GM12878 (cell line): ENCODE measurements at regions of chr2 and their contacts with region 1.

Region 1: DNA sequence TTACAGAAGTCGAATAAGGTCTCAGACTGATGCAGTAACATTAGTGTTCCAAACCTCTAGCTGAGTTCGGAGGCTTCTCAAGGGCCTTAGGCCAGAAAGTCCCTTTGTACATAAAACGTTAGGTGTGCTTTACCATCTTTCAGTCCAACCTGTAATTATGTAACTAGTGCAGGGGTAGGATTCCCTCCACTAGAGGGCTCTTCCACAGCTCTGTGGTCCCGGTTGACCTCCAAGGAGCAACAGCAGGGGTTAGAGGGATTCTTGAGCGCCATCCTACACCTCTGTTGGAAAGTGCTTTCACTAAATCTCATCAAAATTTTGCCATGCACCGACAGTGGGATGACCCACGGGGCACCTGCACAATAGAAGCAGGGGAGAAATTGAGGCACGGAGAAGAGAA is 155.8 kb upstream of the LRP1B start:
- DNase-seq: no peak
- ATAC-seq: peak; percentile 91
- H3K4me3 ChIP-seq: no peak overlapping the region
- H3K27ac ChIP-seq: no peak overlapping the region
- H3K4me1 ChIP-seq: no peaks in the 10 kb centered on the region
- H3K27me3 ChIP-seq: no peaks in the 10 kb centered on the region
- CTCF ChIP-seq: peak; percentile 39 to 58 (median 55)
- EP300 ChIP-seq: no peak
- POLR2A ChIP-seq: no peak
- RAD21 ChIP-seq: peak; percentile 37

Region 2: GRCh38 chr2:142603759-142604158 is 317.2 kb after region 1 on chr2:
- CTCF ChIA-PET with region 1: interaction called, 7 read pairs
- POLR2A ChIA-PET with region 1: no interaction called
- RAD21 ChIA-PET with region 1: no interaction called
- SMC1A ChIA-PET with region 1: no interaction called
- in situ Hi-C with region 1: no loop called
- intact Hi-C with region 1: loop called (anchors 2 kb)
- DNase-seq: no peak
- ATAC-seq: no peak
- H3K4me3 ChIP-seq: no peak overlapping the region
- H3K27ac ChIP-seq: no peak overlapping the region
- H3K4me1 ChIP-seq: no peaks in the 10 kb centered on the region
- H3K27me3 ChIP-seq: no peaks in the 10 kb centered on the region
- CTCF ChIP-seq: no peak; a peak in 1 of 6 replicates
- EP300 ChIP-seq: no peak
- POLR2A ChIP-seq: no peak
- RAD21 ChIP-seq: peak; percentile 33

Region 3: GRCh38 chr2:142642654-142643053 is 356.0 kb after region 1 on chr2:
- CTCF ChIA-PET with region 1: interaction called, 3 read pairs
- POLR2A ChIA-PET with region 1: no interaction called
- RAD21 ChIA-PET with region 1: no interaction called
- SMC1A ChIA-PET with region 1: no interaction called
- in situ Hi-C with region 1: no loop called
- intact Hi-C with region 1: loop called (anchors 1 kb)
- DNase-seq: no peak
- ATAC-seq: no peak
- H3K4me3 ChIP-seq: no peak overlapping the region
- H3K27ac ChIP-seq: no peak overlapping the region
- H3K4me1 ChIP-seq: no peaks in the 10 kb centered on the region
- H3K27me3 ChIP-seq: no peaks in the 10 kb centered on the region
- CTCF ChIP-seq: no peak
- EP300 ChIP-seq: no peak
- POLR2A ChIP-seq: no peak
- RAD21 ChIP-seq: no peak